ENCODE measurements at regions of chr1 and their contacts with region 1.

Region 1: GRCh38 chr1:183471743-183472487 is 384 bp upstream of the SMG7 start:
- DNase-seq: peak; percentile 94 to 98 (median 96)
- ATAC-seq: peak; percentile 82
- H3K4me3 ChIP-seq: peak overlapping the region; percentile 87
- H3K27ac ChIP-seq: peak overlapping the region; percentile 99
- H3K4me1 ChIP-seq: peaks cover 26 to 31% of the 10 kb centered on the region in 2 experiments; a peak in 4 of 5 replicates
- H3K27me3 ChIP-seq: no peaks in the 10 kb centered on the region
- CTCF ChIP-seq: peak in 2 of 3 experiments; percentile 15 to 39; a peak in 3 of 6 replicates
- EP300 ChIP-seq: peak; percentile 63
- POLR2A ChIP-seq: no peak; the same call in 1 of the 2 replicates
- RAD21 ChIP-seq: no peak

Region 2: GRCh38 chr1:183281553-183282091 is 190.3 kb before region 1 on chr1:
- CTCF ChIA-PET with region 1: no interaction called
- POLR2A ChIA-PET with region 1: no interaction called
- in situ Hi-C with region 1: no loop called
- intact Hi-C with region 1: loop called (anchors 5 kb)
- DNase-seq: peak; percentile 79 to 85 (median 82)
- ATAC-seq: peak; percentile 98
- H3K4me3 ChIP-seq: no peak overlapping the region
- H3K27ac ChIP-seq: no peak overlapping the region
- H3K4me1 ChIP-seq: no peaks in the 10 kb centered on the region
- H3K27me3 ChIP-seq: peaks cover 19 to 55% of the 10 kb centered on the region in 2 experiments; a peak in 4 of 5 replicates
- CTCF ChIP-seq: peak; percentile 84 to 93 (median 92)
- EP300 ChIP-seq: no peak
- POLR2A ChIP-seq: no peak
- RAD21 ChIP-seq: peak; percentile 82 to 86

Region 3: GRCh38 chr1:183580281-183580682 is 108.4 kb after region 1 on chr1:
- CTCF ChIA-PET with region 1: interaction called, 3 read pairs
- POLR2A ChIA-PET with region 1: no interaction called
- in situ Hi-C with region 1: no loop called
- intact Hi-C with region 1: loop called (anchors 1 kb)
- DNase-seq: peak in 3 of 4 experiments; percentile 30 to 54 (median 48)
- ATAC-seq: peak; percentile 82
- H3K4me3 ChIP-seq: no peak overlapping the region
- H3K27ac ChIP-seq: no peak overlapping the region
- H3K4me1 ChIP-seq: peaks cover 3 to 9% of the 10 kb centered on the region in 2 experiments; a peak in 3 of 5 replicates
- H3K27me3 ChIP-seq: peaks cover 44 to 46% of the 10 kb centered on the region in 2 experiments
- CTCF ChIP-seq: peak; percentile 40 to 60 (median 46); a peak in 5 of 6 replicates
- EP300 ChIP-seq: no peak
- POLR2A ChIP-seq: no peak
- RAD21 ChIP-seq: peak in 1 of 2 experiments; percentile 52; a peak in 2 of 4 replicates

Region 4: GRCh38 chr1:183622884-183623785 is 151.2 kb after region 1 on chr1:
- CTCF ChIA-PET with region 1: interaction called, 7 read pairs
- POLR2A ChIA-PET with region 1: no interaction called
- in situ Hi-C with region 1: loop called (anchors 5 kb)
- intact Hi-C with region 1: loop called (anchors 1 kb)
- DNase-seq: peak; percentile 54 to 82 (median 60)
- ATAC-seq: peak; percentile 100
- H3K4me3 ChIP-seq: no peak overlapping the region
- H3K27ac ChIP-seq: no peak overlapping the region
- H3K4me1 ChIP-seq: no peaks in the 10 kb centered on the region
- H3K27me3 ChIP-seq: no peaks in the 10 kb centered on the region
- CTCF ChIP-seq: peak; percentile 78 to 91 (median 90)
- EP300 ChIP-seq: no peak
- POLR2A ChIP-seq: no peak
- RAD21 ChIP-seq: peak; percentile 86 to 88

Region 5: DNA sequence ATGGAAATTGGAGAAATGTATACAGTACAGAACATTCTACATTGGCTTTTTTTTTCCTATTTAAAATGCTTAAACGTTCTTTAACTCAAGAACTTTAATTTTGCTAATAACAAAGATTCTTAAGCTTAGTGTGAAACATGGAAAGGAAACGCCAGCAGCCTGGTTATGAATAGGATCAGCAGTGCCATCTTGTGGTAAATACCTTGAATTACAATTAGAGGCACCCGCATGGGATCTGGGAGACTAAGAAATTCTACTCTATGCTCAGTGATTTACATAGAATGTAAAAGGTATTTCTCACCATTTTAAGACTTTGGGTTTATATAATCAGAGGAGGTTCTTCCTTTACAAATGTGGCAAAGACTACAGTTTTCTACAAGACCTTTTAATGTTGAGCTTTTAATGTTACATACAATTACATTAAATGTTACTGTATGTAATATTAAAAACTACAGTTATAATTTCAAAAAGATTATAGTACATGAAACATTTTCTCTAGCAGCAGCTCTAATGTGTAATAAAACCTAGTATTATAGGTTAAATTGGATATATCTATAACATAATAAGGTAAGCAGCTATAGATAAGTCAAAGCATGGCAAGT is 213.3 kb after region 1 on chr1:
- CTCF ChIA-PET with region 1: no interaction called
- POLR2A ChIA-PET with region 1: no interaction called
- in situ Hi-C with region 1: no loop called
- intact Hi-C with region 1: loop called (anchors 2 kb)
- DNase-seq: peak; percentile 65 to 81 (median 80)
- ATAC-seq: peak; percentile 89
- H3K4me3 ChIP-seq: no peak overlapping the region
- H3K27ac ChIP-seq: no peak overlapping the region
- H3K4me1 ChIP-seq: no peaks in the 10 kb centered on the region
- H3K27me3 ChIP-seq: peaks cover 0 to 7% of the 10 kb centered on the region in 2 experiments; a peak in 1 of 5 replicates
- CTCF ChIP-seq: peak; percentile 65 to 88 (median 71); a peak in 5 of 6 replicates
- EP300 ChIP-seq: no peak
- POLR2A ChIP-seq: no peak
- RAD21 ChIP-seq: peak; percentile 87 to 88